ENCODE measurements at regions of chr1 and their contacts with region 1.

Region 1: GRCh38 chr1:67149179-67149770 is 14.5 kb upstream of the C1orf141 start:
- DNase-seq: peak; percentile 45
- ATAC-seq: peak; percentile 94
- H3K4me3 ChIP-seq: no peak overlapping the region
- H3K27ac ChIP-seq: no peak overlapping the region
- H3K4me1 ChIP-seq: no peaks in the 10 kb centered on the region
- H3K27me3 ChIP-seq: no peaks in the 10 kb centered on the region
- CTCF ChIP-seq: peak; percentile 68 to 87 (median 78)
- EP300 ChIP-seq: no peak
- POLR2A ChIP-seq: no peak
- RAD21 ChIP-seq: peak; percentile 90

Region 2: DNA sequence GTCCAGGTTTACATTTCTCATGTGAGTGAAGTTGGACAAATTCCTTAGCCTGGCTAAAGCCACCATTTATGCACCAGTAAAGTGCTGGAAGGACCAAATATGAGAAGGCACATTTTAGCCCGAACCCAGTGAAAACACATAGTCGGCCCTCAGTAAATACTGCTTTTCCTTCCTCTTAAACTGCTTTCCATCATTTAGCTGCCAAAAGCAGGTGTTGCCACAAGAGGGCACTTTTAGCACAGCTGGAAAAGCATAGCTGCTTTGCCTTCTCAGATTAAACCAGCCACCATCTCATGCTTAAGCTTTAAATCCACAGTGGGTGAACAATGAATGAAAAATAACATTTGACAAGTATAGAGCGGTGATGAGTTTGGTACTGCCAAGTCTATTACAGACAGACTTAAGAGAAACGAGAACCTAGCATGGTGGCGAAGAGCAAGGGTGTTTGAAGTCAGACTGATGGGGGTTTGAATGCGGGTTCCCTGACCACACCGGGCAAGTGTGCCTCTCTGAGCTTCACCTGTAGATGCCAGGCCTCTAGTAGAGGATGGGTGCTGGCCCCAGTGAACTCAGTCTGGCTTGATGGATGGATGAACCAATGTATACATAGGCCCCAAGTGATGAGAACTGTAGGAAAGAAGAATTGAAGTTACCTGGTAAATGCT is 153.1 kb before region 1 on chr1:
- CTCF ChIA-PET with region 1: interaction called, 93 read pairs
- POLR2A ChIA-PET with region 1: interaction called, 5 read pairs
- RAD21 ChIA-PET with region 1: interaction called, 64 read pairs
- SMC1A ChIA-PET with region 1: interaction called, 66 read pairs
- in situ Hi-C with region 1: loop called (anchors 5 kb)
- intact Hi-C with region 1: loop called (anchors 1 kb)
- DNase-seq: peak; percentile 59
- ATAC-seq: peak; percentile 89
- H3K4me3 ChIP-seq: no peak overlapping the region
- H3K27ac ChIP-seq: no peak overlapping the region
- H3K4me1 ChIP-seq: no peaks in the 10 kb centered on the region
- H3K27me3 ChIP-seq: no peaks in the 10 kb centered on the region
- CTCF ChIP-seq: peak; percentile 76 to 85 (median 81)
- EP300 ChIP-seq: no peak
- POLR2A ChIP-seq: no peak
- RAD21 ChIP-seq: peak; percentile 94

Region 3: DNA sequence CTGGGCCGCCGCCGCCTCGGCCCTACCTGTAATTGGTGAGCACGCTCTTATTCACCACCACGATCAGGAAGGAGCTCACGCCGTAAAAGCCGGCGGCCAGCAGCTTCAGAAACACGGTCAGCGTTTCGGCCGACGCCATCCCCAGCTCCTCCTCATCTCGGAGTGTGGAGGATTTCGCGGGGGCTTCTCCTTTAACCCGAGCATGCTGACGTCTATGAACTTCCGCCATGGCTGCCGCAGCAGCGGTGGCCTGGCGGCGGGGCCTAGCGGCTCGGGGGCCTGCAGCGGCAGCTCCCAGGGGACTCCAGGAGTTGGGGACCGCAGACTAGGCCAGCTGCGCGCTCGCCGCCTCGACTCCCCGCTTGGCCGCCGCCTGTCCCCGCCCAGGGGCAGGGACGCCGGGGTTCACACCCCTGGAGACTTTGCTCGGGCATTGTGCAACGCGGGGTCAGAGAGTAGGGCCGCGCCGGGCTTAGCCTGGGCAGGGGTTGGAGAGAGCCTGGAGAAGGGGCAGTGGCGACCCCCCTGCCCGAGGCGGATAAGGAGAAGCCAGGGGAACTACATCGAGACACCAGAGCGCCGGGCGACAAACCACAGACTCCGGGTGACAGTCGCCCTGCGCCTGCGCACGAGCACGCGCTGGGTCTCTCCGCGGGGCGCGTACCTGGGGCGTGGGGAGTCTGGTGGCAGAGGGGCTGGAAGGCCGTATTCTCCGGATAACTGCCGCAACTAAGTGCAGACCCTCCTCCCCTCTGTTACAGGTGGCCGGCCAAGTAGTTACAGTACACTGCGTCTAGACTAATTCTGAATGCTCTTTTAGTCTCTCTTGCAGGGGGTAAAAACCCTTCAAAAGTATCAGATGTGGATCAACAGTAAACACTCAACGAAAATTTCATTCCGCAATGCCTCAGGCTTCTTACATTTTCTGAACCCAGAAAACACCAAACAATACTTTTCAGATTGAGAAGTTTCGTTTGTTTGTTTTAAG is 95.2 kb before region 1 on chr1 and contains the start of gene SLC35D1:
- CTCF ChIA-PET with region 1: interaction called, 16 read pairs
- POLR2A ChIA-PET with region 1: interaction called, 3 read pairs
- RAD21 ChIA-PET with region 1: interaction called, 6 read pairs
- SMC1A ChIA-PET with region 1: interaction called, 6 read pairs
- in situ Hi-C with region 1: no loop called
- intact Hi-C with region 1: loop called (anchors 5 kb)
- DNase-seq: peak; percentile 39
- ATAC-seq: peak; percentile 83
- H3K4me3 ChIP-seq: peak within 1 kb of the TSS; percentile 82
- H3K27ac ChIP-seq: peak within 1 kb of the TSS; percentile 78
- H3K4me1 ChIP-seq: no peaks in the 10 kb centered on the region
- H3K27me3 ChIP-seq: no peaks in the 10 kb centered on the region; a peak in 1 of 4 replicates
- CTCF ChIP-seq: no peak
- EP300 ChIP-seq: no peak
- POLR2A ChIP-seq: peak; percentile 87
- RAD21 ChIP-seq: no peak
- polyA plus RNA-seq, gene SLC35D1: 2.9 to 3.4 TPM

Region 4: DNA sequence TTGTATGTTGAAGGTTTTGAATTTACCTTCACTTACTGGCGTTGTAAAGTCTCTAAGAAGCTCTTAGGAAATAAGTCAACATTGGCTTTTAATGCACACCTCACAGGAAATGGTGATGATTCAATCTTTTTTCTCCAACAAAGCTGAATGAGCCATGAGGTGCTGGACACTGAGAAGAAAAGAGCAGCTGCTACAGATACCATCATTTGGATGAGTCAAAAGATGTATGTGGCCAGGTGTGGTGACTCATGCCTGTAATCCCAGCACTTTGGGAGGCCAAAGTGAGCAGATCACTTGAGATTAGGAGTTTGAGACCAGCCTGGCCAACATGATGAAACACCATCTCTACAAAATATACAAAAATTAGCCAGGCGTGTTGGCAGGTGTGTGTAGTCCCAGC is 13.7 kb after region 1 on chr1:
- CTCF ChIA-PET with region 1: interaction called, 41 read pairs
- POLR2A ChIA-PET with region 1: interaction called, 6 read pairs
- RAD21 ChIA-PET with region 1: interaction called, 12 read pairs
- SMC1A ChIA-PET with region 1: interaction called, 34 read pairs
- in situ Hi-C with region 1: no loop called
- intact Hi-C with region 1: no loop called
- DNase-seq: no peak
- ATAC-seq: peak; percentile 53
- H3K4me3 ChIP-seq: no peak overlapping the region
- H3K27ac ChIP-seq: no peak overlapping the region
- H3K4me1 ChIP-seq: peaks cover 3% of the 10 kb centered on the region; the same call in 1 of the 2 replicates
- H3K27me3 ChIP-seq: no peaks in the 10 kb centered on the region
- CTCF ChIP-seq: no peak
- EP300 ChIP-seq: no peak; a peak in 1 of 4 replicates
- POLR2A ChIP-seq: no peak
- RAD21 ChIP-seq: no peak

Region 5: DNA sequence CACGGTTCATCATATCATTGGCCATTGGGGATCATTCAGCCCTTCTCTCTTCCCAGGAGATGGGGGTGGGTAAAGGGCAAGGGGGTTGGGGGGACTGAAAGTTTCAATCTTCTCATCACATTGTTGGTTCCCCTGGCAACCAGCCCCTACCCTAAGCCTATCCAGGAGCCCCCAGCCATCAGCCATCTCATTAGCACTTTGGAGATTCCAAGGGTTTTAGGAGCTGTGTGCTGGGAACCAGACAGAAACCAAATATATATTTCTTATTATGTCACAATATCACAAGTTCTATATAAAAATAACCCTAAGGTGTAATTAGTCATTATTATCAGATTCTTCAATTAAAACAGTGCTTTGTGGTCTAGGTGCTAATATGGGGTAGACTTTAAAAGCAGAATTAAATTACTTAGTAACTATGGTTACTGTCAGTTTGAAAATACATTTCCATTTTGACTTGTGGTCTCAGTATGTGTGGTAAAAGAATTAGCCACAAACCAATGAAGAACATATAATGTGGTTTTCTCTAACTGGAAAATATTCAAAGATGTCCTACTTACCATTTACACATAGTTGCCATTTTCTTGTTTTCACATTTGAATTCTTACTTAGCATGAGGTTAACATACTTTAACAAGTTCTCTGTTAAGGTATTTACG is 45.1 kb after region 1 on chr1:
- CTCF ChIA-PET with region 1: interaction called, 13 read pairs
- POLR2A ChIA-PET with region 1: no interaction called
- RAD21 ChIA-PET with region 1: interaction called, 9 read pairs
- SMC1A ChIA-PET with region 1: interaction called, 16 read pairs
- in situ Hi-C with region 1: no loop called
- intact Hi-C with region 1: no loop called
- DNase-seq: peak; percentile 67
- ATAC-seq: peak; percentile 75
- H3K4me3 ChIP-seq: no peak overlapping the region
- H3K27ac ChIP-seq: no peak overlapping the region
- H3K4me1 ChIP-seq: peaks cover 20% of the 10 kb centered on the region
- H3K27me3 ChIP-seq: no peaks in the 10 kb centered on the region
- CTCF ChIP-seq: no peak
- EP300 ChIP-seq: peak; percentile 94 to 97
- POLR2A ChIP-seq: no peak
- RAD21 ChIP-seq: no peak

Region 6: GRCh38 chr1:67430352-67431155 is 281.3 kb after region 1 on chr1 and contains the start of gene SERBP1:
- CTCF ChIA-PET with region 1: interaction called, 4 read pairs
- POLR2A ChIA-PET with region 1: interaction called, 3 read pairs
- RAD21 ChIA-PET with region 1: no interaction called
- SMC1A ChIA-PET with region 1: no interaction called
- in situ Hi-C with region 1: no loop called
- intact Hi-C with region 1: loop called (anchors 10 kb)
- DNase-seq: peak; percentile 98
- ATAC-seq: peak; percentile 86
- H3K4me3 ChIP-seq: peak within 1 kb of the TSS; percentile 91
- H3K27ac ChIP-seq: peak within 1 kb of the TSS; percentile 96
- H3K4me1 ChIP-seq: peaks cover 15% of the 10 kb centered on the region
- H3K27me3 ChIP-seq: no peaks in the 10 kb centered on the region
- CTCF ChIP-seq: no peak
- EP300 ChIP-seq: peak in 1 of 2 experiments; percentile 50; a peak in 2 of 4 replicates
- POLR2A ChIP-seq: peak; percentile 59
- RAD21 ChIP-seq: no peak
- polyA plus RNA-seq, gene SERBP1: 76.7 to 111 TPM

Measured in GM12878 (cell line).